Naive thymus-derived CD4-positive, alpha-beta T cell (primary cell): ENCODE measurements at regions of chr22 and their contacts with region 1.

Region 1: GRCh38 chr22:50341977-50342650 is 1.0 kb upstream of the PPP6R2 start:
- DNase-seq: peak; percentile 76 to 93 (median 86)
- ATAC-seq: peak; percentile 71
- H3K4me3 ChIP-seq: peak overlapping the region; percentile 86
- H3K4me3 Mint-ChIP-seq: peak overlapping the region; percentile 73 to 91 (median 88)
- H3K27ac ChIP-seq: peak overlapping the region; percentile 96
- H3K27ac Mint-ChIP-seq: peak overlapping the region in 7 of 9 donors; percentile 82 to 96 (median 93)
- H3K4me1 ChIP-seq: peaks cover 13 to 16% of the 10 kb centered on the region in 2 donors
- H3K4me1 Mint-ChIP-seq: peaks cover 0 to 18% (median 9%) of the 10 kb centered on the region in 7 donors
- H3K27me3 ChIP-seq: no peaks in the 10 kb centered on the region
- H3K27me3 Mint-ChIP-seq: no peaks in the 10 kb centered on the region

Region 2: DNA sequence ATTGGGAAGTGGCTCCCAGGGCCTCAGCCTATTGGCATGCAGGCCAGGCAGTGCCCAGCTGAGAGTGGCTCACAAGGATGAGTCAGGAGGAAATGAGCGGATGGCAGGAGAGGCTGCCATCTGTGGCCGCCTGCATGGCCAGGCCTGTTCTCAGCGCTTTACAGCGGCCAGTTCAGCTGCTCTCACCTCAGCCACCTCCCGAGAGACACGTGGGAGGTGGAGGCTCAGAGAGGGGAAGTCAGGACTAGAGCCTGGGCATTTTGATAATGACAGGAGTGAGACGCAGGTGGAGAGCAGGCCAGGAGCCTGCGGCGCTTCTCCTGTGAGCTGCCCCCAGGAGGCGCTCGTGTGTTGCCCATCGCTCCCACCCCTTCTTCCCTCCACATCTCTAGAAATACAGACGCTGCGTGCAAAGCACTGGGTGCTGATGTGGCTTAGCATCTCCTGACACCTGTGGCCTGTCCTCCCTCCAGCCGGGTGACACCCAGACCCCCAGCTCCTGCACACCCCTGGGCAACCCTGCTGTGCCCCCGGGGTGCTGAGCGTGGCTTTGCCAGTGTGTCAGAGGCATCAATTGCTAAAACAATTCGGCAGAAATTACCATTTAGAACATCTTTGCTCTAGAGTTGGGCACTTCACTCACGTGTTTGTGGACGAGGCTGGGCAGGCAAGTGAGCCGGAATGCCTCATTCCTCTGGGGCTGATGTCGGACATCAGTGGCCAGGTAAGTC is 193.0 kb before region 1 on chr22:
- CTCF ChIA-PET with region 1: no interaction called
- POLR2A ChIA-PET with region 1: no interaction called
- intact Hi-C with region 1: loop called (anchors 1 kb)
- DNase-seq: peak; percentile 61 to 80 (median 70)
- ATAC-seq: peak; percentile 96
- H3K4me3 ChIP-seq: no peak overlapping the region
- H3K4me3 Mint-ChIP-seq: no peak overlapping the region
- H3K27ac ChIP-seq: no peak overlapping the region
- H3K27ac Mint-ChIP-seq: no peak overlapping the region
- H3K4me1 ChIP-seq: no peaks in the 10 kb centered on the region
- H3K4me1 Mint-ChIP-seq: peaks cover 0 to 4% (median 0%) of the 10 kb centered on the region in 7 donors
- H3K27me3 ChIP-seq: no peaks in the 10 kb centered on the region
- H3K27me3 Mint-ChIP-seq: peaks cover 0 to 6% (median 0%) of the 10 kb centered on the region in 5 donors

Region 3: DNA sequence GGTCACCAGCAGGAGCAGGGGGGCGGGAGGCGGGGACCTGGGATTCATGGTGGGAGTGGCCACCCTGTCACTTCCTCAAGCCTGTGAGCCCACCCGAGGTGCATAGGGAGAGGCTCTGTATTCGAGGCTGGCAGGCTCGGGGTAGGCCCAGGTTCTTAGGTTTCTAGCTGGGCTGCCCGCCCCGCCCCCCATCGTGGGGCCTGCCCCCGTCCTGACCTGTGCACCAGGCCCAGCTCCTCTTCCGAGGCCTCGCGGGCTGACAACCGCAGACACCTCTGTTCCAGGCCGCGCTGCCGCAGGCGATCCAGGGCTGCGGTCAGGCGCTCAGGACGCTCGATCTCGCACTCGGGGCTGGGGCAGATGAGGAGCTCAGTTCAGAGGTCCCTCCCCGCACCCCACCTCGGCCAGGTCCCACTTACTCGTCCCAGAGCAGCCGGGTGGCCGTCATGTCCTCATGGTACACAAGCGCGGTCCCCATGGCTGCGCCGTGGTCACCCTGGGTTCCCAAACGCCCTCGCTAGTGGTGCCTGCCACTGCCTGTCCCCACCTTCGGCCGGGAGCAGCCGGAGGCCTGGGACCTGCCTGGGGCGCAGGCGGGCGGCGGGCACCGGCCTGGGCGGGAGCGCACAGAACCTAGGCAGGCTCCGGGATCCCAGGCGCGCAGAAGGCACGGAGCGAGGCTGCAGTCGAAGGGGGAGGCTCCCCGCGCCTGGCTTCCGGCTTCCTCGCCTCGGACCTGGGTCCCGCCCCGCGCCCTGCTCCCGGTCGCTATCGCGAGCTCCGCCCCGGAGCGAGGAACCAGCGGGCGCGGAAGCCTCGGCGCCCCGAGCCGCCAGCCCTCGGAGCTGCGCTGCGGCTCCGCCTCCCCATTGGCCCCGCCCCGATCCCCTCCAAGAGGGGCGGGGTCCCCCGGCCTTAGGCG is 91.3 kb before region 1 on chr22 and contains the start of gene HDAC10:
- CTCF ChIA-PET with region 1: interaction called, 18 read pairs
- POLR2A ChIA-PET with region 1: interaction called, 15 read pairs
- intact Hi-C with region 1: loop called in 1 of 2 experiments (anchors 1 kb)
- DNase-seq: peak; percentile 60 to 86 (median 71)
- ATAC-seq: peak; percentile 78
- H3K4me3 ChIP-seq: peak within 1 kb of the TSS; percentile 71
- H3K4me3 Mint-ChIP-seq: peak within 1 kb of the TSS; percentile 61 to 88 (median 80)
- H3K27ac ChIP-seq: peak within 1 kb of the TSS; percentile 71
- H3K27ac Mint-ChIP-seq: peak within 1 kb of the TSS in 7 of 9 donors; percentile 31 to 80 (median 65)
- H3K4me1 ChIP-seq: peaks cover 25 to 38% of the 10 kb centered on the region in 2 donors
- H3K4me1 Mint-ChIP-seq: peaks cover 4 to 26% (median 17%) of the 10 kb centered on the region in 7 donors
- H3K27me3 ChIP-seq: no peaks in the 10 kb centered on the region
- H3K27me3 Mint-ChIP-seq: no peaks in the 10 kb centered on the region
- total RNA-seq, gene HDAC10: 95.9 to 139 (median 105) TPM

Region 4: GRCh38 chr22:50314455-50315288 is 27.4 kb before region 1 on chr22:
- CTCF ChIA-PET with region 1: no interaction called
- POLR2A ChIA-PET with region 1: interaction called, 3 read pairs
- intact Hi-C with region 1: loop called (anchors 1 to 2 kb)
- DNase-seq: peak; percentile 44 to 71 (median 60)
- ATAC-seq: peak; percentile 94
- H3K4me3 ChIP-seq: peak overlapping the region; percentile 53
- H3K4me3 Mint-ChIP-seq: peak overlapping the region; percentile 76 to 92 (median 87)
- H3K27ac ChIP-seq: peak overlapping the region; percentile 64
- H3K27ac Mint-ChIP-seq: peak overlapping the region; percentile 79 to 97 (median 88)
- H3K4me1 ChIP-seq: peaks cover 14 to 17% of the 10 kb centered on the region in 2 donors
- H3K4me1 Mint-ChIP-seq: peaks cover 9 to 18% (median 12%) of the 10 kb centered on the region in 7 donors
- H3K27me3 ChIP-seq: no peaks in the 10 kb centered on the region
- H3K27me3 Mint-ChIP-seq: no peaks in the 10 kb centered on the region

Region 5: GRCh38 chr22:50408311-50408710 is 66.2 kb after region 1 on chr22:
- CTCF ChIA-PET with region 1: no interaction called
- POLR2A ChIA-PET with region 1: no interaction called
- intact Hi-C with region 1: no loop called
- DNase-seq: no peak
- ATAC-seq: no peak
- H3K4me3 ChIP-seq: no peak overlapping the region
- H3K4me3 Mint-ChIP-seq: no peak overlapping the region
- H3K27ac ChIP-seq: no peak overlapping the region
- H3K27ac Mint-ChIP-seq: peak overlapping the region in 1 of 9 donors; percentile 28
- H3K4me1 ChIP-seq: no peaks in the 10 kb centered on the region
- H3K4me1 Mint-ChIP-seq: peaks cover 0 to 12% (median under 1%) of the 10 kb centered on the region in 7 donors
- H3K27me3 ChIP-seq: no peaks in the 10 kb centered on the region
- H3K27me3 Mint-ChIP-seq: no peaks in the 10 kb centered on the region

Region 6: DNA sequence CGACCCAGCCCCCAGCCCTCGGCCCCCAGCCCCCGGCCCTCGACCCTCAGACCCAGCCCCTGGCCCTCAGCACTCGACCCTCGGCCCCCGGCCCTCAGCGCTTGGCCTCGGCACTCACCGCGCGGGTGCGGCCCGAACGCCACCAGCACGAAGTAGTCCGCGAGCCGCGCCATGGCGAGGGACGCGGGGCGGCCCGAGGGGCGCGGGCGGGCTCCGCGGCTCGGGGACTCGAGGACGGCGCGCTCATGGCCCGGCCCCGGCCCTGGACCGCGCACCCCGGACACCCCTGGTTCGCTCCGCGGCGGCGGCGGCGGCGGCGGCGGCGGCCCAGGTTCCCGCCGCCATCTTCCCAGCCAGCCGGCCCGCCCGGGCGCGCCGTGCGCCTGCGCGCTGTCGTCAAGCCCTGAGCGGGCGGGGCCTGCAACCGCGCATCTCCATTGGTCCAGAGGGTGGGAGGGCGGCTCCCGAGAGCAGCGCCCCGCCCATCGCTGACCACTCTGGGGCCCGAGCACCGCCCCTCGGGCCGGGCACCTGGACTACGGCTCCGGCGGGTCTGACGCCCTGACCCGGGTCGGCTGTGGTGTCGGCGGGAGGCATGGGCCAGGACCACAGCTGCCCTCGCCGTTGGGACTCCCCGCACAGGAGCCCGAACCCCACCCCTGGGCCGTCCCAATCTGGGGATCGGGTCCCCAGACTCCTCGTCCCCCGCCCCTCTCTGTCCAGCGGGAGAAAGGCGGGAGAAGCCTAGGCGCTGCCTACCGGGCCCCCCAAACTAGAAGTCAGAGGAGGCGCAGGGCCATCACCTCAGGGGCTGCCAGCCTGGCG is 132.8 kb after region 1 on chr22 and contains the start of gene SBF1:
- CTCF ChIA-PET with region 1: no interaction called
- POLR2A ChIA-PET with region 1: no interaction called
- intact Hi-C with region 1: loop called (anchors 1 to 5 kb)
- DNase-seq: peak; percentile 75 to 94 (median 85)
- ATAC-seq: peak; percentile 89
- H3K4me3 ChIP-seq: peak within 1 kb of the TSS; percentile 72
- H3K4me3 Mint-ChIP-seq: peak within 1 kb of the TSS; percentile 93 to 100 (median 96)
- H3K27ac ChIP-seq: peak within 1 kb of the TSS; percentile 90
- H3K27ac Mint-ChIP-seq: peak within 1 kb of the TSS; percentile 91 to 97 (median 93)
- H3K4me1 ChIP-seq: peaks cover 39 to 42% of the 10 kb centered on the region in 2 donors
- H3K4me1 Mint-ChIP-seq: peaks cover 29 to 56% (median 47%) of the 10 kb centered on the region in 7 donors
- H3K27me3 ChIP-seq: no peaks in the 10 kb centered on the region
- H3K27me3 Mint-ChIP-seq: peaks cover 0 to 19% (median 0%) of the 10 kb centered on the region in 5 donors
- total RNA-seq, gene SBF1: 161 to 209 (median 181) TPM

Region 7: DNA sequence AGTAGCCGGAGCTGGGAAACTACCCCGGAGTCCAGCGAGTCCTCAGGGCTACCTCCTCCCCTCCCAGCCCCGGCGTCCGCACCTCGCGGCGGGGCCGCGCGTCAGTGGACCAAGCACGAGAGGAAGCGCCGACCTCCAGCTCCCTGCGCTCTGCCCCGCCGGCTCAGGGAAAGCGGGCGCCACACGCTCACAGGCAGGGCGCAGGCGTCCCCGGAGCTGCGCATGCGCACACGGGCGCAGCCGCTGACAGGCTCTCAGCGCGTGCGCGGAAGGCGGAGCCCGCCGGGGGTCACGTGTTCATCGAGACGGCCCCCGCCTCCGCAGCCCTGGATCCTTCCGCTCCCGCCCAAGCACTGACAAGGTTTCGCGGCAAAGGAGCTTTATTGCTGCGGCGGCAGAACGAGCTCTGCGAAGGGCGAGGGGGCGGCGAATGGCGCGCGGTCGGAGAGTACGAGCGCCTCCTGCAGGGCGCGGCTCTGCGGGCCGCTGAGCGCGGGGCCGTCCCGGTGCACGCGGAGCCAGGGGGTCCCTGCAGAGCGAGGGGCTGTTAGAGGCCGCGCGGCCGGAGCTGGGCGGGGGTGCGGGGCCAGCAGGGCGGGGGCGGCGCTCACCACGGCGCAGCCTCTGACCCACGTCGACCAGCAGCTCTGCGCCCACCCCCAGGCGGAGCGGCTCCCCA is 183.4 kb after region 1 on chr22 and contains the start of gene SCO2:
- CTCF ChIA-PET with region 1: interaction called, 5 read pairs
- POLR2A ChIA-PET with region 1: no interaction called
- intact Hi-C with region 1: loop called in 1 of 2 experiments (anchors 1 kb)
- DNase-seq: peak; percentile 97 to 99 (median 98)
- ATAC-seq: peak; percentile 77
- H3K4me3 ChIP-seq: peak within 1 kb of the TSS; percentile 77
- H3K4me3 Mint-ChIP-seq: peak within 1 kb of the TSS; percentile 77 to 96 (median 89)
- H3K27ac ChIP-seq: peak within 1 kb of the TSS; percentile 87
- H3K27ac Mint-ChIP-seq: peak within 1 kb of the TSS; percentile 78 to 93 (median 86)
- H3K4me1 ChIP-seq: peaks cover 14 to 21% of the 10 kb centered on the region in 2 donors
- H3K4me1 Mint-ChIP-seq: peaks cover 8 to 33% (median 26%) of the 10 kb centered on the region in 7 donors
- H3K27me3 ChIP-seq: no peaks in the 10 kb centered on the region
- H3K27me3 Mint-ChIP-seq: peaks cover 0 to 6% (median 0%) of the 10 kb centered on the region in 5 donors
- total RNA-seq, gene SCO2: 2.2 to 12.0 (median 5.5) TPM